Activated naive CD8-positive, alpha-beta T cell treated with anti-CD3 and anti-CD28 coated beads, Interleukin-2, amount 10 ng/mL, durations not matched to agents 7 days and 5 days (primary cell): ENCODE measurements at regions of chr1 and their contacts with region 1.

Region 1: DNA sequence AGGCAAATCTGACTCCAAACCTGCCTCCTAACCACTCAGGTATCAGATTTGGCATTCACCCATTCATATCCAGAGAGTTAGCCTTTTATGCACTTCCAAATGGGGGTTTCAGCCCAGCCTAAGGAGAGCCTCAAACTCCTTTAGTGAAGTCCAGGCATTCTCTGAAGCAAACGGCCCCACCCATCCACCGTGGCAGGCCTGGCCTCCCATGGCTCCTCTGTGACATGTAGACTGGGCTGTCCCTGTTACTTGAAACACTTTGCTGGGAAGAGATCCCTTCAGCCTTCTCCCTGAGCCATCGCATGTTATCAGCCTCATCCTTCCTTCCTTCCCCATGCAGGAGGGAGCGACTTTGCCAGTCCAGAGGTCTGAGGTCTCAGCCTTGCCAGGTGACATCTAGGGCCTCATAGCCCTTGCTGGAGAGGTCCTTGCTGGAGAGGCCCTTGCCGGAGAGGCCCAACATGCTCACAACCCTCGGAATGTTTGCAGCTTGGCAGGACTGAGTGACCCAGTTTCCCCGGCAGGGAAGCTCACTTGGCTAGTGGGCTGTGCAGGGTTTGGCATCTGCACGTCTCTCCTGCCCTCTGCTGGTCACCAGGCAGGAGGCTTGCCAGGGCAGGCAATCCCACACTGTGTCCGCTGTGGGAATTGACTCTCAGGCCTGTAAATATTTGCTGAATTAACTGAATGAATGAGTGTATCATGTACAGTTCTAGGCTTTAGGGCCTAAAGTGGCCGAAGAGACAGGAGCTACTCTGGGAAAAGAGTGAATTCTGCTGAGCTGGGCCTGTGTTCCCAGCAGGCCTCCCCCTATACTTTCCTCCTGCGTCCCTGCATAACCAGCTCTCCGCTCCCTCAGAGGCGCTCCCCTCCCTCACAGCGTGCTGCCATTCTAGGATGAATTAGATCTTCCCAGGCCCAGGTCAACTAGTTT is 26.7 kb upstream of the RBM15 start:
- DNase-seq: peak; percentile 69
- ATAC-seq: peak; percentile 90
- H3K4me3 Mint-ChIP-seq: no peak overlapping the region
- H3K27ac Mint-ChIP-seq: no peak overlapping the region
- H3K4me1 Mint-ChIP-seq: no peaks in the 10 kb centered on the region
- H3K27me3 Mint-ChIP-seq: no peaks in the 10 kb centered on the region

Region 2: GRCh38 chr1:110118636-110119615 is 193.5 kb before region 1 on chr1:
- POLR2A ChIA-PET with region 1: no interaction called
- DNase-seq: no peak
- ATAC-seq: no peak
- H3K4me3 Mint-ChIP-seq: no peak overlapping the region
- H3K27ac Mint-ChIP-seq: no peak overlapping the region
- H3K4me1 Mint-ChIP-seq: peaks cover 6% of the 10 kb centered on the region
- H3K27me3 Mint-ChIP-seq: peaks cover 28% of the 10 kb centered on the region

Region 3: DNA sequence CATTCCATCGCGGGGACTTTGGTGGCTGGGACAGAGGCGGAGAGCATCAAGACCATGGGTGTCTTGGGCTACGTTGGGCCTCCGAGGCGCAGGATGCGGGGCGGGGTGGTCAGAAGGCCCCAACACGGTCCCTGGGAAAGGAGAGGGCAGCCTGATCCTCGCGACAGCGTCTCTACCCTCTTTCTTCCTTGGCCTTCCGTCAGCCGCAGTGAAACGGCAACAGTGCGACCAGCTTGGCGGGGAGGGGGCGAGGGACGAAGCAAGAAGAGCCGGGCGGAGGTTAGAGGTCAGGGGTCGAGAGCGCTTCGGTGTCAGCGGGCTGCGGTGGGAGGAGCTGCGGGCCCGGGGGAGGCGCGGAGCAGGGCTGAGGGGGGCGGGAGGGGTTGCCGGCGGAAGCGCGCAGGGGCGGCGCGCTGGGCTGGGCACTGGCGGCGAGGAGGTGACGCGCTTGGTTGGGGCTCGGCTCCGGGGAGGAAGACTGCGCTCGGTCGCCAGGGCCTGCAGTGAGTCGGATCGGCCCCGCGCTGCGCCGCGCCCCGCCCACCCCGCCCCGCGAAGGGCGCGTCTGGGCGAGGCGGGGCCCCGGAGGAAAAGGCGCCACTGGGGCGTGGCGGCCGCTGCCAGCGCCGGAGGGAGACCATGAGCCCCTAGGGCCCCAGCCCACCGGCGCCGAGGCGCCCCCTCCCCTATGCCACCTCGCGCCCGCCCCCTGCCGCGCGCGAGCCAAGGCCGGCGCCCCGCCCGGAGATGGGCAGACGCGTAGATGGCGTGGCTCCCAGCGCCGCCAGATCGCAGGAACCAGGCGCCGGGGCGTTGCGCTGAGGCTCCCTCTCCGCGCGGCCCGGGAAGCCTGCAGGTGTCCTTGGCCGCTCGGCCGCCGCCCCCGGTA is 102.5 kb before region 1 on chr1 and contains the start of gene KCNC4:
- POLR2A ChIA-PET with region 1: interaction called, 12 read pairs
- DNase-seq: peak; percentile 90
- ATAC-seq: peak; percentile 93
- H3K4me3 Mint-ChIP-seq: peak within 1 kb of the TSS; percentile 93
- H3K27ac Mint-ChIP-seq: peak within 1 kb of the TSS; percentile 89
- H3K4me1 Mint-ChIP-seq: peaks cover 36% of the 10 kb centered on the region
- H3K27me3 Mint-ChIP-seq: peaks cover 11% of the 10 kb centered on the region
- total RNA-seq, gene KCNC4: 8.9 to 9.0 TPM

Region 4: GRCh38 chr1:110298991-110299390 is 13.5 kb before region 1 on chr1:
- POLR2A ChIA-PET with region 1: no interaction called
- DNase-seq: no peak
- ATAC-seq: no peak
- H3K4me3 Mint-ChIP-seq: no peak overlapping the region
- H3K27ac Mint-ChIP-seq: no peak overlapping the region
- H3K4me1 Mint-ChIP-seq: no peaks in the 10 kb centered on the region
- H3K27me3 Mint-ChIP-seq: peaks cover 16% of the 10 kb centered on the region